Astrocyte of the cerebellum (primary cell): ENCODE measurements at regions of chr7 and their contacts with region 1.

Region 1: GRCh38 chr7:16564909-16565426 is 38.3 kb downstream of the LRRC72 start:
- DNase-seq: peak; percentile 16
- H3K4me3 ChIP-seq: no peak overlapping the region
- CTCF ChIP-seq: peak; percentile 63

Region 2: DNA sequence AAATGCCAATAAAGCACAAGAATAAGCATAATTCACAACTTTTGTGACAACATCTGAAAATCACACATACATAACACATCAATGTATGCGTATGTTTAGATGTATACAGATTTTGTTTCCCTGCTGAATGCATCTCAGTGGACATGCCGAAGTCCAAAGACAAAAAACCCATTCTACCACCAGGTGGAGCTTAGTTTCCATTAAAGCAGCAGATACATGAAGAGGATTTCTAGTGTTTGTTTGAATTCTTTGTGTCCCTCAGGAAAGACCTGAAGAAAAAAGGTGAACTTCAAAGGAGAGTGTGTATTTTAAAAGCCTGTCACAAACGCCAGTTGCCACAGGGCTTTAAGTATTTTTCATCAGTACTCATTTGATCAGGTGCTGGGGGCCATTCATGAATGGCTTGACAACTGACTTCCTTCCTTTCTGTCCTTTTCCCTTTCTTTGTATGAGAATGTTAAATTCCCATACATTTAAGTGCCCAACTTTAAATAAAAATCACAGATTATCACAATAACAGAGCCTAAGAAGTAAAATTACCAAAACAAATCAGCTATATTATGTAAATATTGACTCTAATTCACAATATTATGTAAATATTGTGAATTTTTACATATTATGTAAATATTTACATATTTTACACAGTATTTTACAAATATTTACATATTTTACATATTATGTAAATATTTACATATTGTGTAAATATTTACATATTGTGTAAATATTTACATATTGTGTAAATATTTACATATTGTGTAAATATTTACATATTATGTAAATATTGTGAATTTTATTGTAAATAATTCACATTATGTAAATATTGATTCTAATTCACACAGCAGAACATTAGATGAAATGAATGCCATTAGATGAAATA is 486.7 kb before region 1 on chr7:
- in situ Hi-C with region 1: loop called (anchors 25 kb)
- DNase-seq: peak; percentile 58
- H3K4me3 ChIP-seq: no peak overlapping the region
- CTCF ChIP-seq: peak; percentile 70

Region 3: DNA sequence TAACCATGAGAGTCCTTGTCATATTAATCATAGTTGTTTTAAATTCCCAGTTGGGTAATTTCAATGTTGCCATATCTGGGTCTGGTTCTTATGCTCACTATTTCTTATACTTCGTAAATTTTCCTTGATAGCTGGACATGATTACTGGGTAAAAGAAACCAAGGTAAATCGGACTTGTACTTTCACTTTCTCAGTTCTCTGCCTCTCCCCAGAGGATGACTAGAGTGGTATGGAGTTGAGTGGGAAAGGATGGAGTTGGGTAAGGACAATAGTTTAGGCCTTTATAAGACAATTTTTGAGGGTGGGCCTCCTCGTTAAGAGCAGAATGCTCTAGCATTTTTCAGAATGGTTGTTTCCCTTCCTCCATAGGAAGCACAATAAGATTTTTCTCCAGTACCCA is 249.7 kb before region 1 on chr7:
- in situ Hi-C with region 1: no loop called
- DNase-seq: no peak
- H3K4me3 ChIP-seq: no peak overlapping the region
- CTCF ChIP-seq: no peak

Region 4: GRCh38 chr7:16420649-16421332 is 144.2 kb before region 1 on chr7:
- in situ Hi-C with region 1: loop called (anchors 25 kb)
- DNase-seq: no peak
- H3K4me3 ChIP-seq: peak overlapping the region; percentile 39
- CTCF ChIP-seq: peak; percentile 29

Region 5: DNA sequence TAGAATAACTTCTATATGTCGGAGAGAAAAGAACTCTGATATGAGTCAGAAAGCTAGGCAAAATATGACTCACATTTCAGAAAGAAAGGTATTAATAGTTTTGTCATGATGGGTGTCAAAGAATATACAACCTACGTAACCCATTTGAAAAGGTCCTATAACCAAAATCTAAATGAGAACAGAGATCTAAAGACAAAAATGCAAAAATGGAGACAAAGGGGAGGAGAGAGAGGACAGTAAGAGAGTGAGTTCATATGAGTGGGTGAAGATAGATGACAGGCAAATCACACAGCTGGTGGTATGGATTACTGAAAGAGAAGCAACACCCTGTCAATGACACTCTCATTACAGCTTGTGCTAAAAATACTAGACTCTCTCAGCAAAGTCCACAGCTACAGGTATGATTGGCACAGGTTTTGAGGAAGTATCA is 55.0 kb after region 1 on chr7:
- in situ Hi-C with region 1: no loop called
- DNase-seq: no peak
- H3K4me3 ChIP-seq: no peak overlapping the region
- CTCF ChIP-seq: no peak